ENCODE measurements at regions of chr2 and their contacts with region 1.

Region 1: DNA sequence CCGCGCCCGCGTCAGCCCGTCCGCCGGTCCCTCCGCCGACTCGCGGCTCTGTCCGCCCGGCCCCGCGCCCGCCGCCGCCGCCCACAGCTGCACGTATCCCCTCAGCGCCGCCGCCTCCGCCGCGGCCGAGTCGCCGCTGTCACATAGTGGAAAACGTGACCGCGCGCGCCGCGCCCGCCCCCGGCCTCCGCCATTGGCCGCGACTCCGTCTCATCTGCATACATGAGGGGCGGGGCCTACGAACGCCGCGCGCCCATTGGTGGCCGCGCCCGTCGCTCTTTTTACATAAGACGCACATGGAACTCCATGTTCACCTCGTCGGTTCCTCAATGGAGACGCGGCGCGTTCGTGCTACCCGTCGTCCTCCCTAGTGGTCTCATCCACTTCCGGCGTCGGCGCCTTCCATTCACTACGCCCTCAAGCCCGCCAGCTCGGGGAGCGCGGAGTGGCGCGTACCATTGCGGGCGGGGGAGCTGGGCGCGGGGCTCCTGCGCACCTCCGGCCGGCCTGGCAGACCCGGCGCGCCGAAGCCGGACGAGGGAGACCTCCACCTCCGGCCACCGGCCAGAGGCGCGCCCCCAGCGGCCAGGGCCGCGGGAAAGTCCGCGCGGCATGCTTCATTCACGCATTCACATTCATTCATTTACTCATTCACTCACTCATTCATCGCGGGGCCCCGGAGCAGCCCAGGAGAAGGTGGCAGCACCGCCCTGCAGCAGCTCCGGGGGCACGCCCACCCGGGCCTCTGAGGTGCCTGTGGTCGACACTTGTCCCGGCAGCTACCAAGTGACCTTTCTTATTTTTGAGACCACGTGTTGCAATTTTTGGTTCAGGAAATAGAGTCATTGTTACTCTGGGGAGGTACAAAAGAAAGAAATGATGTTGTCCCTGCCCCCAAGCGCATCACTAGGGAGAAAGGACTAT is 502 bp upstream of the PER2 start:
- DNase-seq: peak; percentile 99
- H3K4me3 ChIP-seq: peak overlapping the region; percentile 72 to 83
- H3K27ac ChIP-seq: peak overlapping the region; percentile 95 to 96
- H3K4me1 ChIP-seq: peaks cover 38% of the 10 kb centered on the region
- H3K27me3 ChIP-seq: no peaks in the 10 kb centered on the region
- CTCF ChIP-seq: peak in 2 of 4 experiments; percentile 38 to 45
- POLR2A ChIP-seq: peak; percentile 85

Region 2: DNA sequence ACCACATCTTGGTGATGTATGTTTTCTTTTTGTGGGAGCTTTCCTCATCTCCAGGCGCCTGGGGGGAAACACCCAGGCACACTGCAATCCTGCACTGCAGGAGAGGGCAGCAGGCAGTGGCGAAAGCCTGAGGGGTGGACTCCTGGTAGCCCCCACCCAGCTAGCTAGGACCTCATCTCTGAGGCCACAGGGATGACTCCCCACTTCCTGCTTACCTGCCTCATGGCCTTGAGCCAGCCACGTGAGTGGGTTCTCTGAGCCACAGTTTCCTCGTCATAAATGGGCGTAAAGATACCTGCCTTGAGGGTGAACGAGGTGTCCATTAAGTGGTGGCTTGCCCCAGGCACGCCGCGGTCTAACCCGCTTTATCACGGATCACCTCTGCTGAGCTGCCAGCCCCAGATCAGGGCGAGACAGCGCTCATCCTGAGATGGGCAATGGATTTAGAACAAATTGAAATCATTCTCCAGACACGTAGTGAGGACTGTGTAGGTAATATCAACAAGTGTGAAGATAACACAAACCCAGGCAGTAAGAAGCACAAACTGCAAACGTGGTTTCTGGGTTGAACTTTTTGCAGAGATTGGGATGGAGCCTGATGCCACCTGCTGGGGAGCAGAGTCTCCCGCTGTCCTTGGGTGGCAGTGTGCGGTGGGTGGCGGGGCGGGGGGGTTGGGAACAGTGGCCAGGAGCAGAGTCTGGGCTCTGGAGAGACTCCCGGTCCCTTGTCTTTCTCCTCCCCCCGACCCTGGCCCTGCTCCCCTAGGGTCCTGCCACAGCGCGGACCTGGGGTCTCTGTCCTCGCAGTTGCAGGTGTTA is 50.7 kb after region 1 on chr2:
- intact Hi-C with region 1: loop called (anchors 2 kb)
- DNase-seq: no peak
- H3K4me3 ChIP-seq: no peak overlapping the region
- H3K27ac ChIP-seq: no peak overlapping the region
- H3K4me1 ChIP-seq: no peaks in the 10 kb centered on the region
- H3K27me3 ChIP-seq: no peaks in the 10 kb centered on the region
- CTCF ChIP-seq: peak in 3 of 4 experiments; percentile 18 to 48 (median 33)
- POLR2A ChIP-seq: no peak

Measured in prostate gland (tissue), 2 donors.